WTC11 (cell line): ENCODE measurements at regions of chr2 and their contacts with region 1.

Region 1: DNA sequence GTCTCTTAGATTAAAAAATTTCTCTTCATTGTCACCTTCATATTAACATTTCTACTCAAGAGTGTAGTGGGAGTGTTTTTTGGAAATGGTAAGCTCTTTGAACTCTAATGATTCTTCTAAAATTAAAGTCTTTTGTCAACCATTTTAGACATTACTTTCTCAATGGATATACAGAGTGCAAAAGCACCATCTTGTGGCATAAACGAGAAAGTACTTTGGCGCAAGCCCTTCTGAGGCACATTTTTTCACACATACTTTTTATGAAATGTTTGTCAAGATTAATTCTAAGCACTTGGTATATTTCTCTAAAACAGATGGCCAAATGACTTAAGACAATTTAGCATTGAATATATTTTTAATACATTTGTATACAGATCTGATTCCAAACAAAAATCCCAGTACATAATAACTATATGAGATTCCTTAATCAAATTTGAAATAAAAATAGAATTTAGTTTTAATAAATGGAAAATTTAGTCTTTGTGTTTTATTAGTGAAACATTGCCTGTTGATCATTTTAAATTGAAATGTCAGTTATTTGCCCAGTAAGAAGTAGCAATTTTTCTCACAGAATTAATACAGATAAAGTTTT is 63.3 kb upstream of the GALNT5 start:
- DNase-seq: no peak
- ATAC-seq: peak; percentile 61
- H3K4me3 Mint-ChIP-seq: no peak overlapping the region
- H3K27ac Mint-ChIP-seq: no peak overlapping the region
- H3K4me1 Mint-ChIP-seq: peaks cover 5% of the 10 kb centered on the region
- H3K27me3 Mint-ChIP-seq: no peaks in the 10 kb centered on the region
- CTCF ChIP-seq: peak; percentile 34

Region 2: DNA sequence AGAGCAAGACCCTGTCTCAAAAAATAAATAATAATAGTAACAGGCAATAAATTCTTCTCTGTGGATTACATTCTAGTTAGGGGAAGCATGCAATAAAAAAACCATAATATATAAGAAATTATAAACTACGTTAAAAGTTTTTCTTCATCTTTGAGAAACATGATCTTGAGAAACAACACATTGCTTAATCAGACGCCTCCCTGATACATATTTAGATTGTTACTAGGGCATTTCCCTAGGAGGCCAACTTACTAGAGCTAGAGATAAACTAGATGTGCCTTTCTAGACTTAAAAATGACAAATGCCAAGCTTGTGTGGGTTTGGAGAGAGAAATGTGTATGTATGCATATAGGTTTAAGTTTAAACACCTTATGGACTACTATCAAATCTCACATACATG is 13.0 kb before region 1 on chr2:
- CTCF ChIA-PET with region 1: interaction called, 14 read pairs
- POLR2A ChIA-PET with region 1: no interaction called
- DNase-seq: no peak
- ATAC-seq: no peak
- H3K4me3 Mint-ChIP-seq: no peak overlapping the region
- H3K27ac Mint-ChIP-seq: no peak overlapping the region
- H3K4me1 Mint-ChIP-seq: no peaks in the 10 kb centered on the region
- H3K27me3 Mint-ChIP-seq: no peaks in the 10 kb centered on the region
- CTCF ChIP-seq: no peak